ENCODE measurements at regions of chr13 and their contacts with region 1.

Region 1: DNA sequence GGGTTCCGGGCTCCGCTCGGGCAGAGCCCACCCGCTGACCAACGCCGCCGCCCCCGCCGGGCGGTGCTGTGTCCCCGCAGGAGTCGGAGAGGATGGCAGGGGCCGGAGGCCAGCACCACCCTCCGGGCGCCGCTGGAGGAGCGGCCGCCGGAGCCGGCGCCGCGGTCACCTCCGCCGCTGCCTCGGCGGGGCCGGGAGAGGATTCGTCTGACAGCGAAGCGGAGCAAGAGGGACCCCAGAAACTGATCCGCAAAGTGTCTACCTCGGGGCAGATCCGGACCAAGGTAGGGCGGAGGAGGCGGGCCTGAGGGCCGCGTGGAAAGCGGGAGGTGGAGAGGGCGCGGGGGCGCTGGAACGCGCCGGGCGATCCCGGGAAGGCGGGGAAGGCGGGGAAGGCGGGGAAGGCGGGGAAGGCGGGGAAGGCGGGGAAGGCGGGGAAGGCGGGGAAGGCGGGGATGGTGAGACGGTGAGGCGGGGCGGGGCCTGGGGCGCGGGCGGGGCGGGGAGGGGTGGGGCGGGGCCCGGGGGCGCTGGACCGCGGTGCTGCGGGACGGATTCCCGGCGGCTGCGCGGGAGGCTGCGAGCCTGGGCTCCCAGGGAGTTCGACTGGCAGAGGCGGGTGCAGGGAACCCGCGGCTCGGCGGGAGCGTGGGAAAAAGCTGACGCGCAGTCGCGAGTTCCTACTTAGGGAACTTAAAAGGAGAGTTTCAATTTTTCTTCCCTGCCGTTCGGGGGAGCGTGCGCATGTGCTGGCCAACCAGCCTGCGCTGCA is 420 bp downstream of the DGKH start:
- DNase-seq: peak; percentile 23 to 74 (median 60)
- ATAC-seq: peak; percentile 70
- H3K4me3 ChIP-seq: peak overlapping the region; percentile 80 to 83
- H3K4me3 Mint-ChIP-seq: peak overlapping the region; percentile 86
- H3K27ac ChIP-seq: peak overlapping the region in 1 of 2 experiments; percentile 20
- H3K27ac Mint-ChIP-seq: peak overlapping the region; percentile 60
- H3K4me1 ChIP-seq: peaks cover 10% of the 10 kb centered on the region
- H3K4me1 Mint-ChIP-seq: peaks cover 12% of the 10 kb centered on the region
- H3K27me3 ChIP-seq: no peaks in the 10 kb centered on the region
- H3K27me3 Mint-ChIP-seq: no peaks in the 10 kb centered on the region
- CTCF ChIP-seq: no peak

Region 2: GRCh38 chr13:40789275-40790133 is 1259.4 kb before region 1 on chr13 and contains the start of gene SLC25A15:
- CTCF ChIA-PET with region 1: no interaction called
- POLR2A ChIA-PET with region 1: no interaction called
- intact Hi-C with region 1: loop called in 1 of 2 experiments (anchors 5 kb)
- DNase-seq: peak; percentile 37 to 87 (median 71)
- ATAC-seq: peak; percentile 86
- H3K4me3 ChIP-seq: peak within 1 kb of the TSS; percentile 63 to 74
- H3K4me3 Mint-ChIP-seq: peak within 1 kb of the TSS; percentile 84
- H3K27ac ChIP-seq: peak within 1 kb of the TSS; percentile 70 to 74
- H3K27ac Mint-ChIP-seq: peak within 1 kb of the TSS; percentile 82
- H3K4me1 ChIP-seq: peaks cover 15% of the 10 kb centered on the region
- H3K4me1 Mint-ChIP-seq: peaks cover 37% of the 10 kb centered on the region
- H3K27me3 ChIP-seq: no peaks in the 10 kb centered on the region
- H3K27me3 Mint-ChIP-seq: no peaks in the 10 kb centered on the region
- CTCF ChIP-seq: no peak
- total RNA-seq, gene SLC25A15: 5.0 to 7.5 TPM

Region 3: GRCh38 chr13:41708713-41709112 is 340.2 kb before region 1 on chr13:
- CTCF ChIA-PET with region 1: no interaction called
- POLR2A ChIA-PET with region 1: no interaction called
- intact Hi-C with region 1: no loop called
- DNase-seq: no peak
- ATAC-seq: no peak
- H3K4me3 ChIP-seq: no peak overlapping the region
- H3K4me3 Mint-ChIP-seq: no peak overlapping the region
- H3K27ac ChIP-seq: no peak overlapping the region
- H3K27ac Mint-ChIP-seq: no peak overlapping the region
- H3K4me1 ChIP-seq: no peaks in the 10 kb centered on the region
- H3K4me1 Mint-ChIP-seq: no peaks in the 10 kb centered on the region
- H3K27me3 ChIP-seq: no peaks in the 10 kb centered on the region
- H3K27me3 Mint-ChIP-seq: no peaks in the 10 kb centered on the region
- CTCF ChIP-seq: no peak

Region 4: DNA sequence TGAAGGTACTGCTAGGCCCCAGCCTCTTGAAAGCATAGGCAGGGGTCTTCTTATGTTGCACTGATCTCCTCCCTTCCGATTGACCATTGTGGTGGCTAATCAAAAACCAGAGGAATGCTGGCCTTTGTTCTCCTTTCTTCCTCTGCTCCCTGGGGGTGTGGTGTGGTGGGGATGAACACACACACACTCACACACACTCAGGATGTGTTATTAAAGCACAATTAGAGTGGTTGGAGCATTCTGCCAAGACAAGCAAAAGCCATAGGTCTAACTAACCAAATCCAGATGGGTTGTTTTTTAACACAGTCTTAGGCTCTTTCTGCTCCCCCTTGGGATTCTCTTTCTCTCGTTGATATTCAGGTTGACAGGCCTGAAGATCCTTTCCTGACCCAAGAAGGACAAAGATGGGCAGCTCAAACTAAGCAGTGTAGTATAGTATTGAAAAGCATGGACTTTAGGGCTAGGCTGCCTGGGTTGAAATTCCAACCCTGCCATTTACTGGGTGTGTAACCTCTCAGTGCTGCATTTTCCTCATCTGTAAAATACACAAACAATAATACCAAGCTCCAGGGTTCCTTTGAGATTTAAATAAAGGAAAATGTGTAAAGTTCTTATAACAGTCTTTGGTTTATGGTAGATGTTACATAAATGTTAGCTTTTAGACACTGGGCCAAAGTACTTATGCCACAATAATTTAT is 25.9 kb before region 1 on chr13:
- CTCF ChIA-PET with region 1: no interaction called
- POLR2A ChIA-PET with region 1: no interaction called
- intact Hi-C with region 1: no loop called
- DNase-seq: no peak
- ATAC-seq: no peak
- H3K4me3 ChIP-seq: no peak overlapping the region
- H3K4me3 Mint-ChIP-seq: no peak overlapping the region
- H3K27ac ChIP-seq: no peak overlapping the region
- H3K27ac Mint-ChIP-seq: no peak overlapping the region
- H3K4me1 ChIP-seq: no peaks in the 10 kb centered on the region
- H3K4me1 Mint-ChIP-seq: no peaks in the 10 kb centered on the region
- H3K27me3 ChIP-seq: peaks cover 0 to 4% of the 10 kb centered on the region in 2 experiments
- H3K27me3 Mint-ChIP-seq: no peaks in the 10 kb centered on the region
- CTCF ChIP-seq: no peak

Region 5: DNA sequence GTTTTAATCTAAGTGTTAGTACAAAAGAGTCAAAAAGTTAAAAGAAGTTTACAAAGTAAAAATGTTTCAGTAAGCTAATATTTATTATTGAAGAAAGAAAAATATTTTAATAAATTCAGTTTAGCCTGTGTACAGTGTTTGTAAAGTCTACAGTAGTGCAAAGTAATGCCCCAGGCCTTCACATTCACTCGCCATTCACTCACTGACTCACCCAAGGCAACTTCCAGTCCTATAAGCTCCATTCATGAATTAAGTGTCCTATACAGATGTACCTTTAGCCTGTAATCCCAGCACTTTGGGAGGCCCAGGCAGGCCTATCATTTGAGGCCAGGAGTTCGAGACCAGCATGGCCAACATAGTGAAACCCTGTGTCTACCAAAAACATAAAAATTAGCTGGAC is 199.0 kb after region 1 on chr13:
- CTCF ChIA-PET with region 1: no interaction called
- POLR2A ChIA-PET with region 1: no interaction called
- intact Hi-C with region 1: no loop called
- DNase-seq: no peak
- ATAC-seq: no peak
- H3K4me3 ChIP-seq: no peak overlapping the region
- H3K4me3 Mint-ChIP-seq: no peak overlapping the region
- H3K27ac ChIP-seq: no peak overlapping the region
- H3K27ac Mint-ChIP-seq: no peak overlapping the region
- H3K4me1 ChIP-seq: no peaks in the 10 kb centered on the region
- H3K4me1 Mint-ChIP-seq: no peaks in the 10 kb centered on the region
- H3K27me3 ChIP-seq: no peaks in the 10 kb centered on the region
- H3K27me3 Mint-ChIP-seq: no peaks in the 10 kb centered on the region
- CTCF ChIP-seq: no peak

Region 6: GRCh38 chr13:42466123-42466522 is 417.3 kb after region 1 on chr13:
- CTCF ChIA-PET with region 1: no interaction called
- POLR2A ChIA-PET with region 1: no interaction called
- intact Hi-C with region 1: no loop called
- DNase-seq: peak in 1 of 9 experiments; percentile 9
- ATAC-seq: no peak
- H3K4me3 ChIP-seq: no peak overlapping the region
- H3K4me3 Mint-ChIP-seq: peak overlapping the region; percentile 16
- H3K27ac ChIP-seq: peak overlapping the region in 1 of 2 experiments; percentile 49
- H3K27ac Mint-ChIP-seq: peak overlapping the region; percentile 42
- H3K4me1 ChIP-seq: peaks cover 13% of the 10 kb centered on the region
- H3K4me1 Mint-ChIP-seq: peaks cover 23% of the 10 kb centered on the region
- H3K27me3 ChIP-seq: no peaks in the 10 kb centered on the region
- H3K27me3 Mint-ChIP-seq: no peaks in the 10 kb centered on the region
- CTCF ChIP-seq: no peak